Heart right ventricle (tissue), 16 donors: ENCODE measurements at regions of chr11 and their contacts with region 1.

Region 1: DNA sequence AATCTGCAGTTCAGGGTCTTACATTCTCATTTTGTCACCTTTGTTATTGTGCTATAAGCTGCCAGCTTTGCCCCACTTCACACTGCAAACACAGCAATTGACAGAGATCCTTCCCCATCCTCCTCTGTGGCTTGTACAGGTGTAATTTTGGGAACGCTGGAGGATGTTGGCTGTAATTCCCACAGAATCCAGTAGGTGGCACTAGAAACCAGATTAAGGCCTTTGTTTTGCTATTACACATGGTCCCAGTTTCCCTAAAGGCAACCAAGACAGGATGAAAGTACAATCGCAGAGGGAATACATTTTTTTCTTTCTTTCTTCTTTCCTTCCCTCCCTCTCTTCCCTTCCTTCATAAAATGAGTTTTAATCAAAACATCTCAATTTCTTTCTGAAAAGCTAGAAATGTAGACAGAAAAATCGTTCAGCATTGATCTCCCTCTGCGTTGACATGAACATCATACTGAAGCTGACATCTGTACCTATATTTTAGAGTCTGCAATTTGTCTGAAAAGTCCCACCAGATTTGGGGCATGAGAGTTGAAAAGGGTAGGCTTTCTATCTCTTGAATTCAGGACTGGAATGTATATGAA is 21.3 kb upstream of the NELL1 start:
- DNase-seq: peak in 1 of 2 donors; percentile 18
- ATAC-seq: peak in 4 of 8 donors; percentile 12 to 53 (median 47)
- H3K4me3 ChIP-seq: no peak overlapping the region
- H3K27ac ChIP-seq: no peak overlapping the region
- H3K4me1 ChIP-seq: no peaks in the 10 kb centered on the region
- H3K27me3 ChIP-seq: peaks cover 0 to 25% (median 12%) of the 10 kb centered on the region in 7 donors
- CTCF ChIP-seq: peak; percentile 64 to 92 (median 88)

Region 2: DNA sequence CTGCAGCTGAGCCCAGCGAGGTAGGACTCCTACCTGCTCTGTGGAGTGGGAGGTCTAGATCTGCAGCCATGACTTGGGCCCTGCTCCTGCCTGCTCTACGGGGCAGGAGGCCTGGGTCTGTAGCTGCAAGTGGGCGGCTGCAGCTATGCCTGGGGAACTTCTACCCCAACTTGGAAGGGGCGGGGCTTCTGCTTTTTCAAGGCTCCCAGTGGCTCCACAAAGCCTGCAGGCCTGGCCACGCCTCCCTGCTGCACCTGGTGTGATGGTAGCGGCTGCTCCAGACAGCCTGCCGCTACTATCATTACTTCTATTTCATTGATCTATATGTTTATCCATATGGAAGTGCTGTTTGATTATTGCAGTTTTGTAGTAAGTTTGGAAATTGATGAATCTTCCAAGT is 142.6 kb after region 1 on chr11:
- intact Hi-C with region 1: no loop called
- DNase-seq: no peak
- ATAC-seq: no peak
- H3K4me3 ChIP-seq: no peak overlapping the region
- H3K27ac ChIP-seq: no peak overlapping the region
- H3K4me1 ChIP-seq: no peaks in the 10 kb centered on the region
- H3K27me3 ChIP-seq: peaks cover 0 to 12% (median 0%) of the 10 kb centered on the region in 7 donors
- CTCF ChIP-seq: no peak

Region 3: DNA sequence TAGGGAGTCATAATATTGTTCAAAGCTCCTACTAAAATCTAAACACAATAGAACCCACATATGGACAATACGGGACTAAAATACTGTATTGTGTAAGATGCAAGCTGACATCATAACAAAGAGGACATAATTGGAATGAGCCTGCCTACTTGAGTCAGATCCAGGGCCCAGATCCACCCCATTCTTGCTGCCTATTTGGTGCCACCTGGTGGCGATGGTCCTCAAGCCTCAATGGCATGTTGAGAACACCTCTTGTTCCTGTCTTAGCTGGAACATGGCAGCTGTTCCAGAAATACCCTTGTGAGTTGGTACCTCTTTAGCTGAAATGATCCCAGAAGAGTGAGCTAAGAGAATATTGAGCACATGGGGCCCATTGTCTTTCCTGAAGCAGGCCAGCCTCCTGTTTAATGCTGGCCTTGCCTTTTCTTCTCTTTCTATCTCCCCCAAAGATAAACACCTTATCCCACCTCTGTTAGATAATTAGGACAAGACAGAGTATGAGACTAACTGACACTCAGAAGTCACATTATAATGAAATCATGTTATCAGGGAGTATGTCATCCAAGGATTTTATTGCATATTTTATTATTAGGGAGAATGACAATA is 863.9 kb after region 1 on chr11:
- intact Hi-C with region 1: loop called in 3 of 10 experiments (anchors 5 to 10 kb)
- DNase-seq: peak in 1 of 2 donors; percentile 18
- ATAC-seq: no peak
- H3K4me3 ChIP-seq: no peak overlapping the region
- H3K27ac ChIP-seq: no peak overlapping the region
- H3K4me1 ChIP-seq: no peaks in the 10 kb centered on the region
- H3K27me3 ChIP-seq: no peaks in the 10 kb centered on the region
- CTCF ChIP-seq: peak in 8 of 9 donors; percentile 14 to 53 (median 27)

Region 4: DNA sequence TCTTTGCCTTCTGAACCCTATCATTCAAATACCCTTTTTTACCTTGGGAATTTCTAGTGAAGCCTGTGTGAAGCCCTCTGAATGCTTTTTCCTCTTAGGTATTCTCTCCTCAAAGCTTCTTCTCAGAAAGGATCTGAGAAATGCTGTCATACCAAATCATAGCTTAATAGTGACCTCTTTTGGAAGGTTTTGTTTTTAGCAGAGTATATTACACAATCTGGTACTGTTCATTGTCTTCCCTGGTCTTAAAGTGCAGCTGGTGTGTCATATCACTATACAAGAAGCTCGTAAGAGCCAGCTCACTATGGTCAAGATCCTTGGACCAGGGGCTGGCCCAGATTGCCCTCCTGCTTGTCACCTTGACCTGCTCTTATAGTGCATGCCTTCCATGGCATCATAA is 1340.4 kb after region 1 on chr11:
- intact Hi-C with region 1: loop called in 1 of 10 experiments (anchors 10 kb)
- DNase-seq: no peak
- ATAC-seq: no peak
- H3K4me3 ChIP-seq: no peak overlapping the region
- H3K27ac ChIP-seq: no peak overlapping the region
- H3K4me1 ChIP-seq: no peaks in the 10 kb centered on the region
- H3K27me3 ChIP-seq: no peaks in the 10 kb centered on the region
- CTCF ChIP-seq: peak in 5 of 9 donors; percentile 11 to 44 (median 32)

Region 5: GRCh38 chr11:22130462-22131053 is 1482.5 kb after region 1 on chr11:
- intact Hi-C with region 1: loop called in 5 of 10 experiments (anchors 2 to 10 kb)
- DNase-seq: no peak
- ATAC-seq: peak in 4 of 8 donors; percentile 30 to 52 (median 40)
- H3K4me3 ChIP-seq: no peak overlapping the region
- H3K27ac ChIP-seq: no peak overlapping the region
- H3K4me1 ChIP-seq: no peaks in the 10 kb centered on the region
- H3K27me3 ChIP-seq: no peaks in the 10 kb centered on the region
- CTCF ChIP-seq: peak; percentile 24 to 64 (median 50)

Region 6: DNA sequence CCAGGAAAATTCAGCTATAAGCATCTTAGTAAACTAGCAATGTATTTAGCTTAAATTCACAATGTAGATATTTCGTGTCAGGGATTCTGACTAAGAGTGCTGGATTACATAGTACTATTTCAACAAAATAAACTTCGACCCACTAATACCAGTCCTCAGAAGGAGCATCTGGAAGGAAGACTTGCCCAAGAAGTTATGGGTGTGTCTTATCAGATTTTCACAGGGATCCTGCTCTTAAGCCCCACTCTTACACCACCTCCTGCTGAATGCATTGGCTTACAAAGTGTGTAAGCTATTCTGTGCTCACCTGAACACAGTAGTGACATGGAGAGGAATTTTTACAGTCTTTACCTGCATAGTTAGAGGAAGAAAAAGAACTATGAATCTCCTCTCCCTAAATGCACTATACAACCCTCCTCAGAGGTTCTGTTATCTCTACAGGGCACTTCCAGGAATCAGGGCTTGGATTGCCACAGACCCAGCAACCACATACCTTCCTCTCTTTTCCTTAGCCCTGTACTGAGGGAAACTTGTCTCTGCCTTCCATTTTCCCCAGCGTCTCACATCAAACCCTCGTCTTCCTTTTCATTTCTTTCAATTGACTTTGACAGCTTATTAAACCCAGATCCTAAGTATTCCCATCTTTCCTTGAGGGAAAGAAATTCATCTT is 1509.6 kb after region 1 on chr11:
- intact Hi-C with region 1: loop called in 1 of 10 experiments (anchors 10 kb)
- DNase-seq: no peak
- ATAC-seq: no peak
- H3K4me3 ChIP-seq: no peak overlapping the region
- H3K27ac ChIP-seq: no peak overlapping the region
- H3K4me1 ChIP-seq: peaks cover 0 to 4% (median 0%) of the 10 kb centered on the region in 9 donors
- H3K27me3 ChIP-seq: peaks cover 0 to 16% (median 0%) of the 10 kb centered on the region in 7 donors
- CTCF ChIP-seq: no peak

Region 7: DNA sequence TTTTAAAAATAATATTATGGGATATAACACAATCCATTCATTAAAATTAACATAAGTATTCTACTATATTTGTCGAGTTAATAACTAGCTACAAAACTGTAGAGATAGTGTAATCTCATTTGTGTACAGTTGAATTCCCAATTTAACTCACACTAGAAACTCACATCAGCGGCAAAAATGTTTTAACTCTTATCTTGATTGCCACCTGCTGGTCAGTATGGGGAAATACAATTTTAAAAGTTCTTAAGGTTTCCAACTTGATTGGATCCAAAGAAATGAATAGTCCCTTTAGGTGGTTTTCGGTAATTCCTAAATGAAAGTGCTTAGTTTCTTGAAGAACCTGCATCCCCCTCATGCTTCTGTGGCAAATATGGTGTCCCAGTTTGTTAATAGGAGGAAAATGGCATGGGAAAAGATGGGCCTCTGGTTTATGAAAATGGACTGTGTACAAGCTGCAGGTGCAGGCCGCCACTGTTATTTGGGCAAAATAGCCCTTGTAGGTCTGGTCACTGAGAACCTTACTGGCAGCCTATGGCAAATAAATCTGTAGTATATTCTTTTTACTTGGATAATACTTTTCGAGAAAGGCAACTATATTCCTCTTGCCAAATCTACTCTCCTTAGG is 1656.4 kb after region 1 on chr11:
- intact Hi-C with region 1: loop called in 8 of 10 experiments (anchors 5 to 10 kb)
- DNase-seq: no peak
- ATAC-seq: no peak
- H3K4me3 ChIP-seq: no peak overlapping the region
- H3K27ac ChIP-seq: no peak overlapping the region
- H3K4me1 ChIP-seq: no peaks in the 10 kb centered on the region
- H3K27me3 ChIP-seq: peaks cover 0 to 40% (median 7%) of the 10 kb centered on the region in 7 donors
- CTCF ChIP-seq: peak; percentile 44 to 80 (median 73)